CD8-positive, alpha-beta T cell (primary cell): ENCODE measurements at regions of chr6 and their contacts with region 1.

Region 1: DNA sequence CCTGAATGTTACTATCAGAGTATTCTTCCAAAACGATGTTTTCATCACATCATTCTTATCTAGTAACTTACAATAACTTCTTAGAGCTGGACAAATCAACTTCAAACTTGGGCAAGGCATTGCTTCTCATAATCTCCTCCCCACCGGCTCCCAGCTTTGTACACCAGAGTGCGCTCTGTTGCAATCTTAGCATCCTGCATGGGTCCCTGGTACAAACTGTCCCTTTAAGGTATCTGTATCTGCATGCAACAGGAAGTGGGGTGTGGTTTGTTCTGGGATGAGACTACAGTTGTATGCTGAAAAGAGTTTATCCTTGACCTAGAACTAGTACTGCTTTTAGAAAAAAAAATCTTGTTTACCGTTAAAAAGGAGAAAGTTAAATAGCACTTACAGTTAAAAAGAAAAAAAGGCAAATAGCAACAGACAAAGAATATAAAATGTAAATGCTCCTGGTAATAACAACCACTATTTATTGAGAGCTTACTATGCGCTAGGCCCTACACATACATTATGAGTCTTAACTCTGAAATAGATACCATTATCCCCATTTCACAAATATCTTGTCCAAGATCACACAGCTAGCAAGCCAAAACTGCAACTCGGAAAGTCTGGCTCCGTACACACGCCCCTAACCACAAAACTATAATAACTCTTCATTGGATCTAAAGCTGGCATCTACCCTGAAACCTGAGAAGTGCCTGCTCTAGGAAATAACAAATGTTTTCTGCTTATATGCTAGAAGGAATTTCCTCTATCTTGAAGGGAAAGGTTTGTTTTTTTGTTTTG is 9.8 kb upstream of the HECA start:
- DNase-seq: peak; percentile 55 to 93 (median 82)
- ATAC-seq: peak; percentile 95
- H3K4me3 ChIP-seq: peak overlapping the region; percentile 9 to 24
- H3K4me3 Mint-ChIP-seq: peak overlapping the region; percentile 59
- H3K27ac ChIP-seq: peak overlapping the region; percentile 42 to 71
- H3K27ac Mint-ChIP-seq: peak overlapping the region; percentile 93
- H3K4me1 ChIP-seq: peaks cover 30% of the 10 kb centered on the region
- H3K4me1 Mint-ChIP-seq: peaks cover 58% of the 10 kb centered on the region
- H3K27me3 ChIP-seq: no peaks in the 10 kb centered on the region
- H3K27me3 Mint-ChIP-seq: no peaks in the 10 kb centered on the region
- CTCF ChIP-seq: peak; percentile 86

Region 2: DNA sequence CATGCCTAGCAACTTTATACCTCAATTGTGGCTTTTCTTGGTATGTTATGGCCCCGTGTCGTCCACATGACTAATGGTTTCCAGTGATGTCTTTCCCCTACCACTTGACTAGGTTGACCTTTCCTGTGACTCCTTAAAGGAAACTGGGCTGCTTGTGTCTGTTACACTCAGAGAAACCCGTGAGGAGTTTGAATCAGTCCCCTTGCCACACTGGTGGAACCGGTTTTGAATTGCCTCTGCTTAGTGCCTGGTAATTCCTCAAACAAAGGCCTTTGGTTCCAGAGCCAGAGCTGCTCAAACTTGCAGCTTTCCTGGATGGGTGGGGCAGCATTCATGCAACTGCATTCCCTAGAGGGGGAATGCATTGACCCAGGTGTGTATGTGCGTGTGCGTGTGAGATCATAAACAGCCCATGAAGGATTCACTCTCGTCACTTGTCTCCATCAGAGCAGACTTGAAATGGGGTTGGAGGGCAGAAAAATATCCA is 307.2 kb before region 1 on chr6:
- CTCF ChIA-PET with region 1: interaction called, 3 read pairs
- POLR2A ChIA-PET with region 1: no interaction called
- intact Hi-C with region 1: loop called in 1 of 2 experiments (anchors 5 kb)
- DNase-seq: no peak
- ATAC-seq: no peak
- H3K4me3 ChIP-seq: no peak overlapping the region
- H3K4me3 Mint-ChIP-seq: no peak overlapping the region
- H3K27ac ChIP-seq: no peak overlapping the region
- H3K27ac Mint-ChIP-seq: no peak overlapping the region
- H3K4me1 ChIP-seq: no peaks in the 10 kb centered on the region
- H3K4me1 Mint-ChIP-seq: no peaks in the 10 kb centered on the region
- H3K27me3 ChIP-seq: no peaks in the 10 kb centered on the region
- H3K27me3 Mint-ChIP-seq: no peaks in the 10 kb centered on the region
- CTCF ChIP-seq: no peak

Region 3: DNA sequence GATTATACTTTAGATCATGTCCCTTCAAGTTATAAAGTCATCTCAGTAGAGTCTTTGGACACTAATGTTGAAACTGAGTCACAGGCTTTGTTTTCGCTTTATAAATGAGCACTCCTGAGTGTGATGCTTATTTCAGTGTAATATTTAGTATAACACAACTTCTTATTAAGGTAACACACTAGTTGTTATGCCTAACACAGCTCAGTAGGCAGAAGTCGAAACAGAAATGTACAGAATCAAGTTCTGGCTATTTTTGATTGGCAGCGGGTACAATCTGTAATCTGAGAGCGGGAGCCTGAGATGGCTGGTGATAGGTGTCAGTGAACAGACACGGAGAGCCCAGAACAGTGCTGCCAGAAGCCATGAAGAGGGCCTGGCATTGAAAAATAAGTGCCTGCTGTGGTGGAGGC is 21.2 kb after region 1 on chr6:
- CTCF ChIA-PET with region 1: interaction called, 11 read pairs
- POLR2A ChIA-PET with region 1: interaction called, 8 read pairs
- intact Hi-C with region 1: no loop called
- DNase-seq: no peak
- ATAC-seq: peak; percentile 21
- H3K4me3 ChIP-seq: peak overlapping the region in 1 of 2 experiments; percentile 11
- H3K4me3 Mint-ChIP-seq: peak overlapping the region; percentile 71
- H3K27ac ChIP-seq: peak overlapping the region in 1 of 2 experiments; percentile 57
- H3K27ac Mint-ChIP-seq: peak overlapping the region; percentile 62
- H3K4me1 ChIP-seq: peaks cover 89% of the 10 kb centered on the region
- H3K4me1 Mint-ChIP-seq: peaks cover 91% of the 10 kb centered on the region
- H3K27me3 ChIP-seq: no peaks in the 10 kb centered on the region
- H3K27me3 Mint-ChIP-seq: no peaks in the 10 kb centered on the region
- CTCF ChIP-seq: no peak

Region 4: GRCh38 chr6:139173172-139173571 is 48.1 kb after region 1 on chr6:
- CTCF ChIA-PET with region 1: interaction called, 35 read pairs
- POLR2A ChIA-PET with region 1: interaction called, 6 read pairs
- intact Hi-C with region 1: loop called (anchors 1 kb)
- DNase-seq: peak in 4 of 9 experiments; percentile 32 to 74 (median 50)
- ATAC-seq: peak; percentile 84
- H3K4me3 ChIP-seq: no peak overlapping the region
- H3K4me3 Mint-ChIP-seq: peak overlapping the region; percentile 40
- H3K27ac ChIP-seq: peak overlapping the region in 1 of 2 experiments; percentile 34
- H3K27ac Mint-ChIP-seq: peak overlapping the region; percentile 80
- H3K4me1 ChIP-seq: peaks cover 92% of the 10 kb centered on the region
- H3K4me1 Mint-ChIP-seq: peaks cover 93% of the 10 kb centered on the region
- H3K27me3 ChIP-seq: no peaks in the 10 kb centered on the region
- H3K27me3 Mint-ChIP-seq: no peaks in the 10 kb centered on the region
- CTCF ChIP-seq: no peak

Region 5: GRCh38 chr6:139278190-139278589 is 153.1 kb after region 1 on chr6:
- CTCF ChIA-PET with region 1: no interaction called
- POLR2A ChIA-PET with region 1: no interaction called
- intact Hi-C with region 1: no loop called
- DNase-seq: no peak
- ATAC-seq: no peak
- H3K4me3 ChIP-seq: no peak overlapping the region
- H3K4me3 Mint-ChIP-seq: no peak overlapping the region
- H3K27ac ChIP-seq: no peak overlapping the region
- H3K27ac Mint-ChIP-seq: peak overlapping the region; percentile 80
- H3K4me1 ChIP-seq: peaks cover 16% of the 10 kb centered on the region
- H3K4me1 Mint-ChIP-seq: peaks cover 39% of the 10 kb centered on the region
- H3K27me3 ChIP-seq: no peaks in the 10 kb centered on the region
- H3K27me3 Mint-ChIP-seq: no peaks in the 10 kb centered on the region
- CTCF ChIP-seq: no peak

Region 6: GRCh38 chr6:139369568-139370282 is 244.6 kb after region 1 on chr6:
- CTCF ChIA-PET with region 1: interaction called, 27 read pairs
- POLR2A ChIA-PET with region 1: interaction called, 28 read pairs
- intact Hi-C with region 1: loop called (anchors 1 kb)
- DNase-seq: peak in 2 of 9 experiments; percentile 56 to 69
- ATAC-seq: no peak
- H3K4me3 ChIP-seq: no peak overlapping the region
- H3K4me3 Mint-ChIP-seq: peak overlapping the region; percentile 66
- H3K27ac ChIP-seq: peak overlapping the region in 1 of 2 experiments; percentile 86
- H3K27ac Mint-ChIP-seq: peak overlapping the region; percentile 98
- H3K4me1 ChIP-seq: peaks cover 31% of the 10 kb centered on the region
- H3K4me1 Mint-ChIP-seq: peaks cover 49% of the 10 kb centered on the region
- H3K27me3 ChIP-seq: no peaks in the 10 kb centered on the region
- H3K27me3 Mint-ChIP-seq: no peaks in the 10 kb centered on the region
- CTCF ChIP-seq: peak; percentile 88